T-cell (primary cell): ENCODE measurements at regions of chrX and their contacts with region 1.

Region 1: DNA sequence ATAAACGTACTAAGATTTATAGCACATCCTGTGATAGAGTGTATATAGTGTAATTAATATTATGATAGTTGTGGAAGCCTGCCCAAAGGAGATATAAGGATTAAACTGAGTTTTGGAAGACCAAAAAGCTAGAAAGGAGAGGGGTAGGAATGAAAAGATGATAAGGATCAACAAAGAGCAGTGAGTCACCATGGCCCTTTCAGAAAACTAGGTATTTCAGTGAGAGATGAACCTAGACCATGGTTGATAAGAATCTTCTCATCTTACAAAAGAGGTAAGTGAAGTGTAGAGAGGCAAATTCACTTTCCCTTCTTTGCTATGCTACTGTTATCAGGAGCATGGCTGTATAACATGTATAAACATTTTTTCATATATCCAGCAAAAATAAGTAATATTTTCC is 133.8 kb upstream of the PLAC1 start:
- DNase-seq: no peak
- ATAC-seq: no peak
- H3K4me3 ChIP-seq: no peak overlapping the region
- H3K4me3 Mint-ChIP-seq: no peak overlapping the region
- H3K27ac ChIP-seq: no peak overlapping the region
- H3K27ac Mint-ChIP-seq: no peak overlapping the region
- H3K4me1 ChIP-seq: peaks cover 5 to 10% of the 10 kb centered on the region in 2 experiments
- H3K4me1 Mint-ChIP-seq: peaks cover 5 to 34% (median 21%) of the 10 kb centered on the region in 3 donors
- H3K27me3 ChIP-seq: no peaks in the 10 kb centered on the region
- H3K27me3 Mint-ChIP-seq: peaks cover 0 to 20% of the 10 kb centered on the region in 2 donors

Region 2: GRCh38 chrX:134622056-134622812 is 169.8 kb before region 1 on chrX:
- CTCF ChIA-PET with region 1: no interaction called
- POLR2A ChIA-PET with region 1: interaction called in 1 of 2 experiments, 10 read pairs
- DNase-seq: no peak
- ATAC-seq: no peak
- H3K4me3 ChIP-seq: no peak overlapping the region
- H3K4me3 Mint-ChIP-seq: no peak overlapping the region
- H3K27ac ChIP-seq: no peak overlapping the region
- H3K27ac Mint-ChIP-seq: no peak overlapping the region
- H3K4me1 ChIP-seq: no peaks in the 10 kb centered on the region
- H3K4me1 Mint-ChIP-seq: no peaks in the 10 kb centered on the region
- H3K27me3 ChIP-seq: no peaks in the 10 kb centered on the region
- H3K27me3 Mint-ChIP-seq: peaks cover 2 to 36% of the 10 kb centered on the region in 2 donors